CD8-positive, alpha-beta T cell (primary cell): ENCODE measurements at regions of chr11 and their contacts with region 1.

Region 1: DNA sequence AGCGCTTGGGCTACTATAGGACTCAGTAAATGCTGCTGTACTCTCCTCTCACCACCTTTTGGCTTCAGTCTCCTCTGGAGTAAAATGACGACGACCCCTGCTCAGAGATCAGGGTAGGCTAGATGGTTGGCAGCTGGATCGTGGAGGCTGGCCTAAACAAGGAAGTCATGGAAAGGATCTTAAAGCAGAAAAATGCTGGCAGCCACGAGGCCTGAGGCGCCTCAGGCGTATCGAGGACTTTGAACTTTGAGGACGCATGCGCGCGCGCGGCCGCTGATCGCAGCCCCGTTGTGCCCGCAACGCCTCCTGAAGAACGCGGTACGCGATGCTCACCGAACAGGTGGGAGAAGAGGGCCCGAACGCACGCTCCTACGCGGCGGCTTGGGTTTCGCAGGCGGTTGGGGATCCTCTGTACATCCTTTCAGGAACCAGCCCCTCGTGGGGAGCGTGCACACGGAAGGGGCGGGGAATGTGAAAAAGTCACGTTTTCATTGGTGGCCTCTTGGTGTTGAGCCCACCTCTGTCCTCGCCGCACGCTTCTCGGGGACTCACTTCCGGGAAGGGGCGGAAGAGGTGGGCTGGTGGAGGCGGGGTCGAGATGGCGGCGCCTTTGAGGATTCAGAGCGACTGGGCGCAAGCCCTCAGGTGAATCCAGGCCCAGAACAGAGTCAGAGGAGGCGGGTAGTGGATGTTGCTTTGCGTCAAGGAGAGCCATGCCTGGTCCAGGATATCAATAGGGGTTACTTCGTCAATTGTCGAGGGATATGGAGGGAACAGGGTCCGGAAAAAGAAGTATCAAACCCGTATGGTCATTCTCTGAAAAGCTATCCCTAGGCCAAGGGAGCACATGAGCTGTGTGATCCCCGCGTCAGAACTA is at the starts of genes COA4 and PAAF1:
- DNase-seq: peak; percentile 81 to 98 (median 92)
- ATAC-seq: peak; percentile 96
- H3K4me3 ChIP-seq: peak within 1 kb of the TSS; percentile 75 to 79
- H3K4me3 Mint-ChIP-seq: peak within 1 kb of the TSS; percentile 97
- H3K27ac ChIP-seq: peak within 1 kb of the TSS; percentile 79 to 81
- H3K27ac Mint-ChIP-seq: peak within 1 kb of the TSS; percentile 98
- H3K4me1 ChIP-seq: peaks cover 21% of the 10 kb centered on the region
- H3K4me1 Mint-ChIP-seq: peaks cover 42% of the 10 kb centered on the region
- H3K27me3 ChIP-seq: no peaks in the 10 kb centered on the region
- H3K27me3 Mint-ChIP-seq: no peaks in the 10 kb centered on the region
- CTCF ChIP-seq: no peak
- total RNA-seq, gene COA4: 22.0 to 25.1 TPM
- total RNA-seq, gene PAAF1: 6.2 to 6.4 TPM

Region 2: DNA sequence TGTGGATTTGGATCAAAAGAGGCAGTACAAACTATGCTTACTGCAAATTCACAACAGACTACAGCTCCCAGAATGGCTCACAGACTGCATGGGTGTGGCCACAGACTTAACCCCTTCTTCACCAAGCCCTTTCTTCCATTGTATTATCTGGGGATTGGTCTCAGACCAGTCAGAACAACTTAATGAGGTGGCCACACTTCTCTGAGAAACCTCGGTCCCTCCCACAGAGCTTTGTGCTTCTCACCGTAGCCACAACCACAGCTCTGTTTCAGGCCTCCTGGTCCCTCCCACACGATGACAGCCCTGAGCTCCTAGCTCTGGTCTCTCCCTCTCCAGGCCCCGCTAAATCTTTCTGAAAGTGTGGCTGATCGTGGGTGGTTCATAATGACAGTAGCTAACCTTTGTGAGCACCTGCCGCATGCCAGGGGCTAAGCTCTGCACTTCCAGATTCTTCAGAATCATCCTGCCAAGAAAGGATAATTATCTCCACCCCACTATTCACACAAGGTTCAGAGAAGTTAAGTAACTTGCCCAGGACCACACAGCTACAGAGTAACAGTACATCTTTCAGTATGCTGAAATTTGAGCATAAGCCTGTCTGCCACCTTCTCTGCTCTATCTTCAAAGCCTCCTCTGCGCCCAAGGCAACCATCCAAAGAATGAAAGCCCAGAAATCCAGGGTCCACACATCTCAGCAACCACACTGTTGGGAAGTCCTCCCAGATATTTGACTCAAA is 1207.9 kb before region 1 on chr11:
- CTCF ChIA-PET with region 1: no interaction called
- POLR2A ChIA-PET with region 1: no interaction called
- intact Hi-C with region 1: no loop called
- DNase-seq: peak in 1 of 9 experiments; percentile 28
- ATAC-seq: no peak
- H3K4me3 ChIP-seq: no peak overlapping the region
- H3K4me3 Mint-ChIP-seq: no peak overlapping the region
- H3K27ac ChIP-seq: no peak overlapping the region
- H3K27ac Mint-ChIP-seq: no peak overlapping the region
- H3K4me1 ChIP-seq: no peaks in the 10 kb centered on the region
- H3K4me1 Mint-ChIP-seq: peaks cover 2% of the 10 kb centered on the region
- H3K27me3 ChIP-seq: peaks cover 34 to 38% of the 10 kb centered on the region in 2 experiments
- H3K27me3 Mint-ChIP-seq: peaks cover 69% of the 10 kb centered on the region
- CTCF ChIP-seq: no peak

Region 3: GRCh38 chr11:72814286-72815109 is 1062.2 kb before region 1 on chr11 and contains the start of gene ATG16L2:
- CTCF ChIA-PET with region 1: no interaction called
- POLR2A ChIA-PET with region 1: no interaction called
- intact Hi-C with region 1: loop called in 1 of 2 experiments (anchors 10 kb)
- DNase-seq: peak; percentile 83 to 96 (median 88)
- ATAC-seq: peak; percentile 78
- H3K4me3 ChIP-seq: peak within 1 kb of the TSS; percentile 97 to 98
- H3K4me3 Mint-ChIP-seq: peak within 1 kb of the TSS; percentile 99
- H3K27ac ChIP-seq: peak within 1 kb of the TSS; percentile 99 to 100
- H3K27ac Mint-ChIP-seq: peak within 1 kb of the TSS; percentile 99
- H3K4me1 ChIP-seq: peaks cover 26% of the 10 kb centered on the region
- H3K4me1 Mint-ChIP-seq: peaks cover 48% of the 10 kb centered on the region
- H3K27me3 ChIP-seq: no peaks in the 10 kb centered on the region
- H3K27me3 Mint-ChIP-seq: no peaks in the 10 kb centered on the region
- CTCF ChIP-seq: peak; percentile 20
- total RNA-seq, gene ATG16L2: 45.7 to 52.8 TPM

Region 4: GRCh38 chr11:73779084-73779902 is 97.4 kb before region 1 on chr11:
- CTCF ChIA-PET with region 1: no interaction called
- POLR2A ChIA-PET with region 1: interaction called, 3 read pairs
- intact Hi-C with region 1: loop called in 1 of 2 experiments (anchors 1 kb)
- DNase-seq: peak; percentile 95 to 99 (median 97)
- ATAC-seq: peak; percentile 97
- H3K4me3 ChIP-seq: peak overlapping the region; percentile 52 to 62
- H3K4me3 Mint-ChIP-seq: peak overlapping the region; percentile 97
- H3K27ac ChIP-seq: peak overlapping the region; percentile 83 to 97
- H3K27ac Mint-ChIP-seq: peak overlapping the region; percentile 100
- H3K4me1 ChIP-seq: peaks cover 4% of the 10 kb centered on the region
- H3K4me1 Mint-ChIP-seq: peaks cover 16% of the 10 kb centered on the region
- H3K27me3 ChIP-seq: no peaks in the 10 kb centered on the region
- H3K27me3 Mint-ChIP-seq: no peaks in the 10 kb centered on the region
- CTCF ChIP-seq: no peak

Region 5: DNA sequence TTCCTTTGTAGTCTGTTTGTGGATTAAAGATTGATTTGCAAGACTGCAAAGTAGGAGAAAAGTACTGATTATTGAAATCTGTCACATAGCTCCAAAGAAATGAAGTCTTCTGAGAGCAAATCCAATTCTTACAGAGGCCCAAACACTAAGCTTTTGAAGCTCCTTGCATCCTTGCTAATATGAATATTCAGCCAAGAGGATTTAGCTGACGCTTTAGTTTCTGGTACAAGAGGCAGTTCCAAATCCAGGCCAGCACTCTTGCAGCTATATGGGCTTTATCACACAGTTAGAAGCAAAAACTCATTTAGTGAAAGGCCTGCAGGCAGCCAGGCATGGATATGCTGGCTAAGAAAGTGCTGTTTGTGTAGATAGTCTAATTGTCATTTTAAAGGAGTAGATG is 12.9 kb after region 1 on chr11:
- CTCF ChIA-PET with region 1: no interaction called
- POLR2A ChIA-PET with region 1: no interaction called
- intact Hi-C with region 1: no loop called
- DNase-seq: no peak
- ATAC-seq: no peak
- H3K4me3 ChIP-seq: no peak overlapping the region
- H3K4me3 Mint-ChIP-seq: no peak overlapping the region
- H3K27ac ChIP-seq: no peak overlapping the region
- H3K27ac Mint-ChIP-seq: no peak overlapping the region
- H3K4me1 ChIP-seq: no peaks in the 10 kb centered on the region
- H3K4me1 Mint-ChIP-seq: peaks cover 9% of the 10 kb centered on the region
- H3K27me3 ChIP-seq: no peaks in the 10 kb centered on the region
- H3K27me3 Mint-ChIP-seq: no peaks in the 10 kb centered on the region
- CTCF ChIP-seq: no peak

Region 6: GRCh38 chr11:74398244-74399159 is 521.8 kb after region 1 on chr11 and contains the start of gene PGM2L1:
- CTCF ChIA-PET with region 1: no interaction called
- POLR2A ChIA-PET with region 1: no interaction called
- intact Hi-C with region 1: loop called in 1 of 2 experiments (anchors 5 kb)
- DNase-seq: peak; percentile 85 to 97 (median 95)
- ATAC-seq: peak; percentile 86
- H3K4me3 ChIP-seq: peak within 1 kb of the TSS; percentile 51 to 92
- H3K4me3 Mint-ChIP-seq: peak within 1 kb of the TSS; percentile 99
- H3K27ac ChIP-seq: peak within 1 kb of the TSS; percentile 44 to 58
- H3K27ac Mint-ChIP-seq: peak within 1 kb of the TSS; percentile 96
- H3K4me1 ChIP-seq: peaks cover 10% of the 10 kb centered on the region
- H3K4me1 Mint-ChIP-seq: peaks cover 26% of the 10 kb centered on the region
- H3K27me3 ChIP-seq: no peaks in the 10 kb centered on the region
- H3K27me3 Mint-ChIP-seq: no peaks in the 10 kb centered on the region
- CTCF ChIP-seq: no peak
- total RNA-seq, gene PGM2L1: 5.2 to 5.8 TPM